WTC11 (cell line): ENCODE measurements at regions of chr4 and their contacts with region 1.

Region 1: DNA sequence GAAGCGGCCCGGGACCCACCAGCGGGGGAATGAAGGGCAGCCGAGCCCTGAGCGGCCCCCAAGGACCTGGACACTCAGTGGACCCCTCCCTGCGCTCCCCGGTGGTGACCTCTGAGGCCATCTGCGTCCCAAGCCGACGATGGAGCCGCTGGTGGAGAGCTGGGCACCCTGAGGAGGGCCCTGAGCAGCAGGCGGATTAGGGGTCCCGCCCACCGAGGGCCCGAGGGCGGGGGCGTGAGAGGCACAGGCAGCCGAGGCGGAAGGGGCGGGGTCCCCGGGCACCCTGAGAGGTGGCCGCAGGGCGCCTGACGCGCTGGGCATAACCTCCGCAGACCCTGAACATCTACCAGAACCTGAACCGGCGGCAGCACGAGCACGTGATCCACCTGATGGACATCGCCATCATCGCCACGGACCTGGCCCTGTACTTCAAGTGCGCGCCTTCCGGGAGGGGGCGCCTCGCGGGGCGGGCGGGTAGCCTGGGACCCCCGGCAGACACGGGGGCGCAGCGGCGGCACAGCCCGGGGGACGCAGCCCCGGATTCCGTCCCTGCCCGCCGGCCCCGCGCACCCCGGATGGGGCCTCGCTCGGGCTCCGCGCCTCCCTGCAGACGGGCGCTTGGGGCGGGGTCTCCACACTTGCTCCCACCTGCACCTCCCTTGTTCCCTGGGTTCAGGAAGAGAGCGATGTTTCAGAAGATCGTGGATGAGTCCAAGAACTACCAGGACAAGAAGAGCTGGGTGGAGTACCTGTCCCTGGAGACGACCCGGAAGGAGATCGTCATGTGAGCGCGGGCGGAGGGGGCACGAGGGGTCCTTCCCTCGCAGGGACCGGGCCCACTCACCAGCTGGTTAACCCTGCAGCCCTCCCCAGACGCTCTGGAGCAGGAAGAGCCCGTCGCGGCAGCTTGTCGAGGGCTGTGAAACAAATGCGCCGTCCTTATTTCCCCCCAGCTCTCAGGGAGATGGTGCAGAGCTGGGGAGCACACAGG is 10.3 kb downstream of the ATP5ME start:
- DNase-seq: peak; percentile 71
- ATAC-seq: peak; percentile 68
- H3K4me3 Mint-ChIP-seq: peak overlapping the region; percentile 70
- H3K27ac Mint-ChIP-seq: no peak overlapping the region
- H3K4me1 Mint-ChIP-seq: peaks cover 3% of the 10 kb centered on the region
- H3K27me3 Mint-ChIP-seq: no peaks in the 10 kb centered on the region; the same call in 1 of the 2 replicates
- CTCF ChIP-seq: no peak

Region 2: DNA sequence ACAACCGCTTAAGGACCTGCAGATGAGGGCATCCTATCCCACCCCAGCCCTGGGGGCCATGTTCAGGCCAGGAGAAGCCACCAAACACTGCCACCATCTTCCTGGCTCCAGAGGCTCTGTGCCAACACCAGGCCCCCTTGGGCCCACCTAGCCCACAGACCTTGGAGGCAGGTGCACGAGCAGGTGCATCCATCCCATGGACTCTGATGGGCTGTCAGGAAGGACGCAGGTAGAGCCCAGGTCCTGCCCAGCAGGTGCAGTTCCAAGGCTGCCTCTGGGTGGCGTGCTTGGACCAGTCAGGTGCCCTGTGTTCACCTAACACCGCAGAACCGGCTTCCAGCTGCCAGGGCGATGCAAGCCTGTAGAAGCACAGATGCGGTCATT is 61.2 kb before region 1 on chr4:
- CTCF ChIA-PET with region 1: interaction called, 13 read pairs
- POLR2A ChIA-PET with region 1: no interaction called
- DNase-seq: peak; percentile 99
- ATAC-seq: peak; percentile 99
- H3K4me3 Mint-ChIP-seq: no peak overlapping the region
- H3K27ac Mint-ChIP-seq: no peak overlapping the region
- H3K4me1 Mint-ChIP-seq: peaks cover 6% of the 10 kb centered on the region
- H3K27me3 Mint-ChIP-seq: peaks cover 4% of the 10 kb centered on the region
- CTCF ChIP-seq: peak; percentile 92

Region 3: DNA sequence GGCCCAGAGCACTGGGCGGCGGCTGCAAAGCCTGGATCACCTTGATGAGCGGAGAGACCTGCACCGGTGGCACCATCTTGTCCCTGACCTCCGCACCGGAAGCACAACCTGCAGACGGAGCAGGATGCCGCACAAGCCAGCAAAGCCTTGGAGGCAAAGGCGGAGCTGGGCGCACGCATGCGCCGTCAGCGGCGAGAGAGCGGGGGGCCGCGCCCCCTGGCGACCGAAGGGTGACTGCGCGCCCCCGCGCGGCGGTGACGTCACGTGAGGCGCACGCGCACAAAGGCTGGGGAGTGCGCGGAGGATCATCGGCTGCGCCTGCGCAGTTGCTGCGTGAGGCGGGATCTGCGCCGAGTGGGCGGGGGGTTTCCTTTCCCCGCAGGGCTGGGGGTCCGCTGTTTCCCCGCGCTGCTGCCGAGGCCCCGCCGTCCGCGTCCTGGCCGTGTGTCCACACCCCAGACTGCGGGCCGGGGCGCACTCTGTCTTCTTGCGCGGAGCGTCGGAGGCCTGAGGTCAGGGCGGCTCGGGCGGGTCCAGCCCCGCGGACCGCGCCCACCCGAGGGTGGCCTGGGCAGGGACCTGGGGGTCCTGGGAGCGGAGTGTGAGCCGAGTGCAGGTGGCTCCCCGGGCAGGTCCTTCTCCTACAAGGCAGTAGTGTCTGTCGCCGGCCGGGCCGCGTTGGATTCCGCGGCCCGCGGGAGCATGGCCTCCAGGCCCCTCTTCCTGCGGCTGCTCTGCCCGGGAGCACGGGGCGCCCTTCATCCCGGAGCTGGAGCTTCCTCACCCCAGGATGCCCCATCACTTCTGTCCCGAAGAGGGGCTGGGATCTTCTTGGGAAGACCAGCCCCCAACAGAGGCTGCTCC is 10.7 kb after region 1 on chr4 and contains the starts of genes ATP5ME and MYL5:
- CTCF ChIA-PET with region 1: interaction called, 12 read pairs
- POLR2A ChIA-PET with region 1: interaction called, 4 read pairs
- DNase-seq: peak; percentile 93
- ATAC-seq: peak; percentile 83
- H3K4me3 Mint-ChIP-seq: peak within 1 kb of the TSS; percentile 86
- H3K27ac Mint-ChIP-seq: peak within 1 kb of the TSS; percentile 94
- H3K4me1 Mint-ChIP-seq: peaks cover 7% of the 10 kb centered on the region
- H3K27me3 Mint-ChIP-seq: peaks cover 3% of the 10 kb centered on the region
- CTCF ChIP-seq: peak; percentile 94
- total RNA-seq, gene ATP5ME: 458 to 478 TPM (median 468 TPM) in 3 replicates
- total RNA-seq, gene MYL5: 12.1 to 22.2 TPM (median 14.8 TPM) in 3 replicates